Right ventricle myocardium inferior (tissue), 1 donor: ENCODE measurements at regions of chr12 and their contacts with region 1.

Region 1: GRCh38 chr12:63843721-63844390 is 644 bp upstream of the SRGAP1 start:
- DNase-seq: peak; percentile 93
- ATAC-seq: peak; percentile 95

Region 2: GRCh38 chr12:63792338-63792737 is 51.5 kb before region 1 on chr12:
- intact Hi-C with region 1: no loop called
- DNase-seq: no peak
- ATAC-seq: no peak

Region 3: DNA sequence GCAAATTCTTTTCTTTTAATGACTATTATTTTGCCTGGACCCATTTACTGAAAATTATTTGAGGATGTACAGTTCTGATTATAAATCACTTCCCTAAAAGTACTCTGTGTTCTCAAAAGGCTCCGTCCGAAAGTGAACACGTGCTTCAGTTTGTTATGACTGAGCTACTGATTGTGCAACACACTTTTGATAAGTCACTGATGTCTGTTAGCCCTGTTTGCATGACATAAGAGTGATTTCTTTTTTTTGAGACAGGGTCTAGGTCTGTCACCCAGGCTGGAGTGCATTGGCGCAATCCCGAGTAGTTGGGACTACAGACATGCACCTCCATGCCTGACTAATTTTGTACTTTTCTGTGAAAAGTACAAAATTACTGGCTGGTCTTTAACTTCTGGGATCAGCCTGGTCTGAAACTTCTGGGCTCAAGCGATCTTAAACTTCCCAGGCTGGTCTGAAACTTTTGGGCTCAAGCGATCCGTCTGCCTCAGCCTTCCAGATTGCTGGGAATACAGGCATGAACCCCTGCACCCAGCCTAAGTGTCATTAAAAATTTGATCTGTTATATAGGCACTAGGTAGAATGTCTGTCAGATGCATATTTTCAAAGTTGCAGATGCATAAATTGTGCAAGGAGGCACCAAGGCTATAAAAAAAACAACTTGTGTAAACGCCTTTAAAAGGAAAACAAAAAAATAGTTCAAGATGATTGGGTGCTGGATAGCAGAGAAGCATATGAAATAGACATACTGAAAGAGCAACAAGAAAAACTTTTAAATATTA is 112.2 kb after region 1 on chr12:
- intact Hi-C with region 1: loop called (anchors 10 kb)
- DNase-seq: no peak
- ATAC-seq: peak; percentile 87

Region 4: GRCh38 chr12:64088431-64089349 is 244.8 kb after region 1 on chr12:
- intact Hi-C with region 1: loop called (anchors 5 kb)
- DNase-seq: no peak
- ATAC-seq: peak; percentile 93

Region 5: DNA sequence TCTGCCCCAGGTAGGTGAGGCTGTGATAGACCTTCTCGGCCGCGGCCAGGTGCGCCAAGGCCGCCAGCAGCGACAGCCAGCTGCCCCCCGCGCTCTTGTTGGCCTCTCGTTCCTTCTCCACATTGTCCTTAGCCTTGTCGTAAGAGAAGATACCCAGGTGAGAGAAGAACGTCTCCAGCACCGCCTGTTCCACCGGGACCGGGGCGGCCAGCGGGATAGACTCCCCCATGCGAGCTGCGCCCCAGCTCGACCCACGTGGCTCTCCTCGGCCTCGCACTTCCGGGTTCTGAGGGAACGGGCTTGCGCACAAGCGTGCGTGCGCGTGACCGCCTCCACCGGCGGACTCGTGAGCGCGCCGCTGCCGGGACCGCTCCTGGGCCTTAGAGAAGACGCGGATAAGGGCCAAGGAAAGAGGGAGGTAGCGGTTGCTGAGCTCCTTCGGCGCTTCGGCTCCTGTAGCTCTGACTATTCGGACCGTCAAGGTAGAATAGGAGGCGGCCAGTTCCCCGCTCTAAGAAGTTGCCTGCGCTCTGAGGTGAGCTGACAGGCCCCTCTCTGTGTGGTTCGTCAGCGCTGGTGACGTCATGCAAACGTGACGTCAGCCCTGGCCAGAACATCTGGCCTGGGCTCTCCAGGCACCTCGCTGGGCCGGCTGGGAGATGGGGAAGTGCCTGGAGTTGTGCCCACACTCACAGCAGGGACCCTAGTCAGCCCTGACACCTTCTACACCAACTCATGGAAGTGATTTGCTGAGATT is 378.3 kb after region 1 on chr12 and contains the start of gene KICS2:
- intact Hi-C with region 1: loop called (anchors 1 kb)
- DNase-seq: peak; percentile 97
- ATAC-seq: peak; percentile 99
- total RNA-seq, gene KICS2: 3.8 TPM

Region 6: DNA sequence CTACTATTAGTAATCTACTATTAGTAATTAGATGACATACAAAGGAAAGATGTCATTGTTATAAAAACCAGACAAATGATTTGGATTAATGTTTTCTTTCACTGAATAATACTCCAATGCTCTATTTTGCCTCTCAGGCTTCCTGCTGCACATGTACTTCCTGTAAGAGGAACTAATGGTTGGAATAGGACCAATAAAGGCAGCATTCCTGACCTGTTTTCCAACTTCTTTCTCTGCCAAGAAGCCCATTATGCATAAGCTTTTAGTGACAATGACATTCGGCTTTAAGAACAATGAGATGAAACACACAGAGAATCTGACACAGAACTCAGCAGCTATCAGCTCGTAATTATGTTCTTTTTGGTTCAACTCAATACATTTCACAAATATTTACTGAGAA is 551.9 kb after region 1 on chr12:
- intact Hi-C with region 1: loop called (anchors 5 kb)
- DNase-seq: no peak
- ATAC-seq: no peak